ENCODE measurements at regions of chr3 and their contacts with region 1.

Region 1: DNA sequence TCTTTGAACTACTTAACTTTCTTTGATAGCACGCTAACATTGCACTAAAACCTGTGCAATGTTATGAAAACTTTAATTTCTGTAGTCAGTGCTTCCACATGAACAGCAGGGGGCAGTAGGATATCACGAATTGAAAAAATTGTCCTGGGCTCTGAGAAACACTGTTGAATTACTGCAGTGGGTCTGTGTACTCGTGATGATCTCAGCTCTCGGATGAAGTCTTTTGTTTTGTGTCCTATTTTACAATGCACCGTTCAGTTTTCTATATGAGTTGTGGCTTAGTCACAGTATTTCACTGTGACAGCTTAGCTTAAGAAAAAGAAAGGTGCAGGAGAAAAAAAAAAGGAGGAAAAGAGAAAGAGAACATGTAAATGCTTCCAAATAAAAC is 141.3 kb upstream of the CCDC54 start:
- DNase-seq: no peak
- H3K4me3 ChIP-seq: peak overlapping the region; percentile 49 to 70
- H3K27ac ChIP-seq: peak overlapping the region; percentile 15 to 58
- H3K4me1 ChIP-seq: peaks cover 0 to 6% of the 10 kb centered on the region in 2 donors
- H3K27me3 ChIP-seq: no peaks in the 10 kb centered on the region
- CTCF ChIP-seq: peak; percentile 66 to 88 (median 85)

Region 2: DNA sequence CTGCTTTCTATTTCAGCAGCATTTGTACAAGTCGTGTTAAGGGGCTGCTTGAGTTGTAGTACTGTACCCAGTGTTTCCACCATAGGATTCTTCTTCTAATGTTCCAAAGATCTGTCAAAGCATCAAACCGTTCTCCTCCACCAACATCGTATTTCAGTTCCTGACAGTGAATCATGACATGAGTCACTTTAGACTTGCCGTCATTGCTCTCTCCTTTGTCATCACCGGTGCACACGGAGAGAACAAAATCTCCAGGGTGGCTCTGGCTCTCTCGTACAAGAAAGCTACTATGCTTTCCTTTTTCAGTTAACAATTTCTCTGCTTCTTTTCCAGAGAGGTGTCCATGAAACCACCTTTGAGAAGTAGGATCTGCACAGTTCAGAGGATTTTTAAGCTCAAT is 129.6 kb before region 1 on chr3:
- intact Hi-C with region 1: no loop called
- DNase-seq: no peak
- H3K4me3 ChIP-seq: no peak overlapping the region
- H3K27ac ChIP-seq: no peak overlapping the region
- H3K4me1 ChIP-seq: no peaks in the 10 kb centered on the region
- H3K27me3 ChIP-seq: no peaks in the 10 kb centered on the region
- CTCF ChIP-seq: no peak

Region 3: GRCh38 chr3:107429320-107430181 is 193.6 kb after region 1 on chr3:
- intact Hi-C with region 1: loop called (anchors 2 kb)
- DNase-seq: peak; percentile 13 to 86
- H3K4me3 ChIP-seq: peak overlapping the region; percentile 84 to 85
- H3K27ac ChIP-seq: peak overlapping the region; percentile 99 to 100
- H3K4me1 ChIP-seq: peaks cover 0 to 9% of the 10 kb centered on the region in 2 donors
- H3K27me3 ChIP-seq: no peaks in the 10 kb centered on the region
- CTCF ChIP-seq: peak; percentile 78 to 85 (median 83)

Region 4: DNA sequence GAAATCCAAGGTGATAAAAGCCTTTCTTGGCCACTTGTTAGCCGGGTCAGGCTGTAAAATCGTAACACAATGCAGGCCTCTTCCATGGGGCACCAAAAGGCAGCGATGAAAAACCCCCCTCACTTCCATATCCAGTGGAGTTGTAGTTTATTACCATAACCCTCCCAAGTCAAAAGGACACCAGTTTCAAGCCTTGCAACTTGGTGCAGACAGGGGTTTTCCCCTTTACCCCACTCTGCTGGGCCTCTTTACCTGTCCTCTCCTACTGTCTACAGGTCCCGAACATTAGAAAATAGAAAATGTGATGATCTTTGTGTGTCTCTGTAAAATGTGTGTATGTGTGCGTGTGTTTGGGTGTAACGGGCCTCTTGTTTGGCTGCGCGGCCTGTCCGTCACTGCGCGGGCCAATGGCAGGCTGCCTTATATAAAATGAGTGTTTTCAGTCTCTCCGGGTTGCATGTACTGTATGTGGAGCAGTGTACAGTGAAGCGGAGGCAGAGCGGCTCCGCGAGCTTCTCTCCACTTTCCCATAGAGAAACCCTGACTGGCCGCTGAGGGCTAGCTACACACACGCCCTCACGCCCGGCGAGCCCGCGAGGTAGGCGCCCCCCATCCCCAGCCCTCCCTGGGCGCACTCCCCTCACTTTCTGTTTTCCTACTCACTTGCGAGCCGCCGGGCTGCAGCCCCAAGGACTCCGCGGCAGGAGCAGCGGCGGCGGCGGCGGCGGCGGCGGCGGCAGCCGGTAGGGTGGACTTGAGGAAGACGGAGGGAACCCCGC is 286.8 kb after region 1 on chr3 and contains the start of gene BBX:
- intact Hi-C with region 1: loop called (anchors 2 kb)
- DNase-seq: peak; percentile 85 to 98
- H3K4me3 ChIP-seq: peak within 1 kb of the TSS; percentile 94 to 95
- H3K27ac ChIP-seq: peak within 1 kb of the TSS; percentile 96 to 98
- H3K4me1 ChIP-seq: peaks cover 0 to 11% of the 10 kb centered on the region in 2 donors
- H3K27me3 ChIP-seq: no peaks in the 10 kb centered on the region
- CTCF ChIP-seq: no peak
- total RNA-seq, gene BBX: 18.0 TPM

Region 5: GRCh38 chr3:107740992-107741896 is 505.3 kb after region 1 on chr3:
- intact Hi-C with region 1: loop called (anchors 5 kb)
- DNase-seq: no peak
- H3K4me3 ChIP-seq: no peak overlapping the region
- H3K27ac ChIP-seq: no peak overlapping the region
- H3K4me1 ChIP-seq: no peaks in the 10 kb centered on the region
- H3K27me3 ChIP-seq: no peaks in the 10 kb centered on the region
- CTCF ChIP-seq: peak; percentile 3 to 67 (median 53)

Region 6: GRCh38 chr3:107897471-107898061 is 661.6 kb after region 1 on chr3:
- intact Hi-C with region 1: no loop called
- DNase-seq: no peak
- H3K4me3 ChIP-seq: no peak overlapping the region
- H3K27ac ChIP-seq: no peak overlapping the region
- H3K4me1 ChIP-seq: no peaks in the 10 kb centered on the region
- H3K27me3 ChIP-seq: no peaks in the 10 kb centered on the region
- CTCF ChIP-seq: no peak

Region 7: GRCh38 chr3:108489771-108490170 is 1253.8 kb after region 1 on chr3:
- intact Hi-C with region 1: loop called (anchors 10 kb)
- DNase-seq: no peak
- H3K4me3 ChIP-seq: no peak overlapping the region
- H3K27ac ChIP-seq: no peak overlapping the region
- H3K4me1 ChIP-seq: no peaks in the 10 kb centered on the region
- H3K27me3 ChIP-seq: no peaks in the 10 kb centered on the region
- CTCF ChIP-seq: peak; percentile 63 to 74 (median 69)

Region 8: DNA sequence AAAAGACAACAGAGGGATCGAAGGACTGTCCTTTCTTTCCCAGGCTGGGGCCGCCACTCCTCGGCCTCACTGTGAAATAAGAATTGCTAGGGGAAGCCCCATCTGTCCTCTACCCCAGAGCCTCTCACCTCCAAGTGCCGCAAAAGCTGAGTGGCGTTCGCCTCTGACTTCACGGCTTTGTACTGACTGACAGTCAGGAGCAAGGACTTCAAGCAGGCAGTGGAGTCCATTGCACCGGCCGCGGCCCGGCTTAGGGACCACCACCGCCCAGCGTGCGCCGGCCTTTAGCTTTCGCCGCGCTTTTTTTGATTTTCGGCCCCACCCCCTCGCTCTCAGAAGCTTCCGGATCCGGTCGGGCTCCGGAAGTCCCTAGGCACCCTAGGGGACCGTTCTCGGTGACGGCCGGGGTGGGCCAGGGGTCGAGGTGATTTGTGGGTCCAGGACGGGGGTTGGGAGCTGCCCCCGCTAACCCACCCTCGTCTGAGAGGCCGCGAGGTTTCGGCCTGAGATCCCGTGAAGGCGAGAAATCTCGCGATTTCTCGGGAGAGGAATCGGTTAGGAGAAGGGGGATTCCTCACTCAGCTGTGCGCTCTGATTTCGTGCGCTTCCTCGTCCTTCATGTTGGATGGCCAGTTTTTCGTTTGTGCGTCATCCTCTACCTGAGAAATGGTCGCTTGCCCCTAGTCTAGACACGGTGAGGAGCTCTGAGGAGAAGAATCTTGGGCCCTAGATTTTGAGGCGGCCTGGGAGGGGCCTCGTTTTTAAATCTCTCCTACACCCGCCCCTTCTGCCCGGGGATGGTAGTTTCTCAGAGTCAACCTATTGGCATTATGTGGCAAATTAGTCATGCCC is 1353.5 kb after region 1 on chr3 and contains the starts of genes CIP2A and DZIP3:
- intact Hi-C with region 1: loop called (anchors 10 kb)
- DNase-seq: peak; percentile 20 to 88
- H3K4me3 ChIP-seq: peak within 1 kb of the TSS; percentile 70 to 71
- H3K27ac ChIP-seq: peak within 1 kb of the TSS; percentile 93
- H3K4me1 ChIP-seq: peaks cover 0 to 2% of the 10 kb centered on the region in 2 donors
- H3K27me3 ChIP-seq: no peaks in the 10 kb centered on the region
- CTCF ChIP-seq: no peak
- total RNA-seq, gene CIP2A: not detected
- total RNA-seq, gene DZIP3: 7.0 TPM

Measured in ascending aorta (tissue), 2 donors.